ENCODE measurements at regions of chr2 and their contacts with region 1.

Region 1: DNA sequence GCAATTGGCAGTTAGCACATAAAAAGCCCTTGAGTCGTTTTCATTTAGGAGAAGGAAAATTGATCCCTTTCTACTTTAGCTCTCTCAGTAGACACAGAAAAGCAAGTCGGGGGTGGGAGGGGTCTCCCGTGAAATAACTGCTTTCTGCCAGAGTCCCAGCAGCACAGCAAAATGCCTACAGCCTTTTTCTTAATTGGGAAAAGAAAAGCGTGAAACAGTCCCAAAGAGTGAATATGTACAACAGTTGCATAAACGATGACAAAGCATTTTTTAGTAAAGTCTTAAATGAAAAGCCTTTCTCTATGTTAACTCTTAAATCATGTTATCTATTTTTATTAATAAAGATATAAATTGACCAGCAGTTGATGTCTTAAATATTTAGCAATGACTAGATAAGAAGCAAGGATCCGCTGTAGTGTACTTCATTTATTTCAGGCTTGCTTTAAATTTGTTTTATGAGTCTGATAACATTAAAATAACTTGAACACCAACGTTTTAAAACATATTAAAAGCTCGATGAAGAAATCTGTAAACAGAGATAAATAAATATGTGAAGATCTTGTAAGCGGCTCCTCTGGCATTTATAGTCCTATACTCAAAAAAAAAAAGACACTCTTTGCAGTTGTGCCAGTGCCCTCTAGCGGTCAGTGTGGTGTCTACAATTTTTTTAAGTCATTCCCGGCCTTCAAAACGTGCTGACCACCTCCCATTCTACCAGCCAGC is 42.3 kb upstream of the ATIC start:
- DNase-seq: peak; percentile 5 to 78 (median 58)
- ATAC-seq: peak; percentile 38
- H3K4me3 ChIP-seq: no peak overlapping the region
- H3K4me3 Mint-ChIP-seq: no peak overlapping the region
- H3K27ac ChIP-seq: no peak overlapping the region
- H3K27ac Mint-ChIP-seq: no peak overlapping the region
- H3K4me1 ChIP-seq: no peaks in the 10 kb centered on the region
- H3K4me1 Mint-ChIP-seq: no peaks in the 10 kb centered on the region
- H3K27me3 ChIP-seq: no peaks in the 10 kb centered on the region
- H3K27me3 Mint-ChIP-seq: no peaks in the 10 kb centered on the region
- CTCF ChIP-seq: peak; percentile 91

Region 2: GRCh38 chr2:213806125-213806726 is 1463.3 kb before region 1 on chr2:
- CTCF ChIA-PET with region 1: no interaction called
- POLR2A ChIA-PET with region 1: no interaction called
- intact Hi-C with region 1: loop called in 1 of 2 experiments (anchors 5 kb)
- DNase-seq: no peak
- ATAC-seq: no peak
- H3K4me3 ChIP-seq: no peak overlapping the region
- H3K4me3 Mint-ChIP-seq: no peak overlapping the region
- H3K27ac ChIP-seq: no peak overlapping the region
- H3K27ac Mint-ChIP-seq: no peak overlapping the region
- H3K4me1 ChIP-seq: no peaks in the 10 kb centered on the region
- H3K4me1 Mint-ChIP-seq: no peaks in the 10 kb centered on the region
- H3K27me3 ChIP-seq: no peaks in the 10 kb centered on the region
- H3K27me3 Mint-ChIP-seq: no peaks in the 10 kb centered on the region
- CTCF ChIP-seq: no peak

Region 3: GRCh38 chr2:213934560-213934959 is 1335.0 kb before region 1 on chr2:
- CTCF ChIA-PET with region 1: no interaction called
- POLR2A ChIA-PET with region 1: no interaction called
- intact Hi-C with region 1: loop called in 1 of 2 experiments (anchors 10 kb)
- DNase-seq: peak in 3 of 9 experiments; percentile 9 to 41 (median 27)
- ATAC-seq: no peak
- H3K4me3 ChIP-seq: no peak overlapping the region
- H3K4me3 Mint-ChIP-seq: no peak overlapping the region
- H3K27ac ChIP-seq: no peak overlapping the region
- H3K27ac Mint-ChIP-seq: no peak overlapping the region
- H3K4me1 ChIP-seq: no peaks in the 10 kb centered on the region
- H3K4me1 Mint-ChIP-seq: no peaks in the 10 kb centered on the region
- H3K27me3 ChIP-seq: no peaks in the 10 kb centered on the region
- H3K27me3 Mint-ChIP-seq: no peaks in the 10 kb centered on the region
- CTCF ChIP-seq: peak; percentile 56